ENCODE measurements at regions of chr14 and their contacts with region 1.

Region 1: DNA sequence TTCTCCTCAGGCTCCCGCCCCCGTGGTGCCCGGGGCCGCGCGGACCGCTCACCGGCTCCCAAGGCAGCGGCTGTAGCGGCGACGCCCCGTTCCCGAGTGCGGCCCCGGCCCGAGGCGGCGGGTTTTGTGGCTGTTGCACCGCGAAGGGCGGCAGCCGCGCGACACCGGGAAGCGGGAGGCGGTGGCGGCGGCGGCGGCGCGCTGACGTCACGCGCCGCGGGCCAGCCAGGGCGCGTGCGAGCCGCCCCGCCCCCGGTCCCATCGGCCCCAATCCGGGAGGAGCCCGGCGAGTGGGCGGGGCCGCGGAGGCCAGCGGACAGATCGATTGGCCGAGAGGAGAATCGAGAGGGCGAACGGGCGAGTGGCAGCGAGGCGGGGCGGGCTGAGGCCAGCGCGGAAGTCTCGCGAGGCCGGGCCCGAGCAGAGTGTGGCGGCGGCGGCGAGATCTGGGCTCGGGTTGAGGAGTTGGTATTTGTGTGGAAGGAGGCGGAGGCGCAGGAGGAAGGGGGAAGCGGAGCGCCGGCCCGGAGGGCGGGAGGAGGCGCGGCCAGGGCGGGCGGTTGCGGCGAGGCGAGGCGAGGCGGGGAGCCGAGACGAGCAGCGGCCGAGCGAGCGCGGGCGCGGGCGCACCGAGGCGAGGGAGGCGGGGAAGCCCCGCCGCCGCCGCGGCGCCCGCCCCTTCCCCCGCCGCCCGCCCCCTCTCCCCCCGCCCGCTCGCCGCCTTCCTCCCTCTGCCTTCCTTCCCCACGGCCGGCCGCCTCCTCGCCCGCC is at the start of gene YY1:
- DNase-seq: no peak
- ATAC-seq: peak; percentile 91
- H3K4me3 ChIP-seq: peak within 1 kb of the TSS; percentile 77 to 94
- H3K27ac ChIP-seq: peak within 1 kb of the TSS; percentile 93
- H3K4me1 ChIP-seq: peaks cover 19% of the 10 kb centered on the region
- H3K27me3 ChIP-seq: no peaks in the 10 kb centered on the region
- CTCF ChIP-seq: no peak
- total RNA-seq, gene YY1: 71.3 TPM

Region 2: DNA sequence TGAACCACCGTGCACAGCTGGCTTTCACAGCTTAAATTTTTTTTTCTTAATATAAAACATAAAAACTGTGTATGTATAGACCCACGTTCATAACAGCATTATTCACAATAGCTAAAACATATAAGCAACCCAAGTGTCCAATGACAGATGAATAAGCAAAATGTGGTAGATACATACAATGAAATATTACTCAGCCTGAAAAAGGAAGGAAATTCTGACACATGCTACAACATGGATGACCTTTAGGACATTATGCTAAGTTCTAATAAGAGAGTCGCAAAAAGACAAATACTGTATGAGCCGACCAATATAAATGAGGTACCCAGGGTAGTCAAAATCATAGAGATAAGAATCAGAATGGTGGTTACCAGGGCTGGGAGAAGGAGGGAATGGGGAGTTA is 13.4 kb before region 1 on chr14:
- CTCF ChIA-PET with region 1: no interaction called
- POLR2A ChIA-PET with region 1: interaction called, 14 read pairs
- in situ Hi-C with region 1: no loop called
- intact Hi-C with region 1: no loop called
- DNase-seq: no peak
- ATAC-seq: no peak
- H3K4me3 ChIP-seq: no peak overlapping the region
- H3K27ac ChIP-seq: no peak overlapping the region
- H3K4me1 ChIP-seq: peaks cover 28% of the 10 kb centered on the region
- H3K27me3 ChIP-seq: no peaks in the 10 kb centered on the region
- CTCF ChIP-seq: no peak

Measured in Panc1 (cell line).